WTC11 (cell line): ENCODE measurements at regions of chr19 and their contacts with region 1.

Region 1: GRCh38 chr19:14136509-14137281 is at the start of gene ASF1B:
- DNase-seq: peak; percentile 98
- ATAC-seq: peak; percentile 90
- H3K4me3 Mint-ChIP-seq: peak within 1 kb of the TSS; percentile 86
- H3K27ac Mint-ChIP-seq: peak within 1 kb of the TSS; percentile 98
- H3K4me1 Mint-ChIP-seq: peaks cover 19% of the 10 kb centered on the region
- H3K27me3 Mint-ChIP-seq: no peaks in the 10 kb centered on the region; the same call in 1 of the 2 replicates
- CTCF ChIP-seq: no peak; the same call in 1 of the 2 replicates
- total RNA-seq, gene ASF1B: 37.1 to 40.4 TPM (median 38.4 TPM) in 3 replicates

Region 2: GRCh38 chr19:13986348-13986904 is 150.3 kb before region 1 on chr19:
- CTCF ChIA-PET with region 1: no interaction called
- POLR2A ChIA-PET with region 1: no interaction called
- DNase-seq: peak; percentile 83
- ATAC-seq: peak; percentile 69
- H3K4me3 Mint-ChIP-seq: peak overlapping the region; percentile 43
- H3K27ac Mint-ChIP-seq: peak overlapping the region; percentile 45; the same call in 1 of the 2 replicates
- H3K4me1 Mint-ChIP-seq: peaks cover 63% of the 10 kb centered on the region
- H3K27me3 Mint-ChIP-seq: no peaks in the 10 kb centered on the region
- CTCF ChIP-seq: no peak

Region 3: DNA sequence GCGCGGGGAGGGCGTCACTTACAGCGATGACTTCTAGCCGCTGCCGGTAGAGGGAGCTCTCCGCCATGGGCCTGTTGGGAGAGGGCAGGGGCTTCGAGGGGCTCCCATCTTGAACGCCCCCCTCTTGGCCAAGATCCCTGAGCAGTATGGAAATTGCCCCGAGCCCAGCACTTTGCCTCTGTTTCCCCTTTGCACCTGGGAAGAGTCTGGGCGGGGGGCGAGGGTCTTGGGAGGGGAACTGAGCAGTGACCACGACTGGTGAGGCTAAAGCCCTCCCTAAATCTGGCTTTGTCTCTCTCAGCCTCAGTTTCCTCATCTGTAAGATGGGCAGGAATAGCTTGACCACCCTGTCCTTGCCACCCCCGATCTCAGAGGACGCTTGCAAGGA is 77.6 kb before region 1 on chr19:
- CTCF ChIA-PET with region 1: interaction called, 14 read pairs
- POLR2A ChIA-PET with region 1: no interaction called
- DNase-seq: peak; percentile 78
- ATAC-seq: peak; percentile 50
- H3K4me3 Mint-ChIP-seq: peak overlapping the region; percentile 86
- H3K27ac Mint-ChIP-seq: no peak overlapping the region
- H3K4me1 Mint-ChIP-seq: peaks cover 16% of the 10 kb centered on the region
- H3K27me3 Mint-ChIP-seq: peaks cover 32% of the 10 kb centered on the region
- CTCF ChIP-seq: peak; percentile 87

Region 4: GRCh38 chr19:14117668-14118164 is 19.0 kb before region 1 on chr19 and contains the start of gene PRKACA:
- CTCF ChIA-PET with region 1: interaction called, 21 read pairs
- POLR2A ChIA-PET with region 1: interaction called, 10 read pairs
- DNase-seq: peak; percentile 99
- ATAC-seq: peak; percentile 94
- H3K4me3 Mint-ChIP-seq: peak within 1 kb of the TSS; percentile 90
- H3K27ac Mint-ChIP-seq: peak within 1 kb of the TSS; percentile 98
- H3K4me1 Mint-ChIP-seq: peaks cover 32% of the 10 kb centered on the region
- H3K27me3 Mint-ChIP-seq: 0 out of 2 replicates have a peak, but pooled peaks cover 7% of the 10 kb centered on the region
- CTCF ChIP-seq: no peak
- total RNA-seq, gene PRKACA: 37.8 to 48.0 TPM (median 41.7 TPM) in 3 replicates

Region 5: GRCh38 chr19:14347999-14348889 is 211.5 kb after region 1 on chr19:
- CTCF ChIA-PET with region 1: interaction called, 40 read pairs
- POLR2A ChIA-PET with region 1: interaction called, 5 read pairs
- DNase-seq: peak; percentile 80
- ATAC-seq: peak; percentile 82
- H3K4me3 Mint-ChIP-seq: peak overlapping the region; percentile 45
- H3K27ac Mint-ChIP-seq: no peak overlapping the region
- H3K4me1 Mint-ChIP-seq: peaks cover under 1% of the 10 kb centered on the region
- H3K27me3 Mint-ChIP-seq: peaks cover 9% of the 10 kb centered on the region; the same call in 1 of the 2 replicates
- CTCF ChIP-seq: peak; percentile 93

Region 6: GRCh38 chr19:14432791-14433553 is 296.3 kb after region 1 on chr19 and contains the start of gene PKN1:
- CTCF ChIA-PET with region 1: interaction called, 12 read pairs
- POLR2A ChIA-PET with region 1: no interaction called
- DNase-seq: peak; percentile 72
- ATAC-seq: peak; percentile 54
- H3K4me3 Mint-ChIP-seq: peak within 1 kb of the TSS; percentile 82
- H3K27ac Mint-ChIP-seq: peak within 1 kb of the TSS; percentile 72
- H3K4me1 Mint-ChIP-seq: peaks cover 7% of the 10 kb centered on the region
- H3K27me3 Mint-ChIP-seq: peaks cover 29% of the 10 kb centered on the region
- CTCF ChIP-seq: no peak
- total RNA-seq, gene PKN1: 170 to 197 TPM (median 187 TPM) in 3 replicates